ENCODE measurements at regions of chr22 and their contacts with region 1.

Region 1: GRCh38 chr22:37343863-37344734 is 61.8 kb downstream of the CYTH4 start:
- DNase-seq: no peak

Region 2: DNA sequence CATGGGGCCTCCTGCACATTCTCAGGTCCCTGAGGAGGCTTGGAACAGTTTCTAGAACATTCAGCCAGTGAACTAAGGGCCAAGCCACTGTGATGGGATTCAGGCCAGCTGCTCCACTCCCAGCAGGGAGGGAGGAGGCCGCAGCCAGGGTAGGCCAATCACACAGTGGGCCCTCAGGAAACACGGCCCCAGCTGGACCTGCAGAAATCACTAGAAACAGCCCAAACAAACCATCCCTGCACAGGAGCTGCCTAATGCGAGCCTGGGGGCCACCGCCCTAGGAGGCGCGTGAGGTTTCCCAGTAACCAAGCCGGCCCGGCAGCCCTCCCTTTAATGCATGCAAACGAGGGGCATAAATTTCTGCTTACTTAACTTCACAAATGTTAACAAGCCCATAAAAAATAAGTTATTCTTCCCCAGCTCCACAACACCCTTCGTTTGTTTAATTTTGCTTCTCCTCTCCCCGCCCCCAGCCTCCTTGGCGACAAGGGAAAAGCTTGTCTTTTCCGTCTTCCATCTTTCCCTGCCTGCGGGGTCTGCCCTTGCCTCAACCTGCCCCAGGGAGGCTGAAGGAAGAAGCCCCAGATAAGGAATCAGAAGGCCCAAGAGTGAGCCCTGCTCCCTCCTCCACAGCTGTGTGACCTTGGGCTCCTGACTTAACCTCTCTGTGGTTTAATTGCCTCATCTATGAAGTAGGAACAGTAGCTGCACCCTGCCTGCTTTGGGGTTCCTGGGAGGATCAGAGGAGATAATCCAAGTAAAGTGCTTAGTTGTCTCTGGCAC is 57.5 kb after region 1 on chr22:
- CTCF ChIA-PET with region 1: interaction called, 10 read pairs
- POLR2A ChIA-PET with region 1: no interaction called
- DNase-seq: no peak

Measured in HEK293T (cell line).